CD8-positive, alpha-beta T cell (primary cell): ENCODE measurements at regions of chr3 and their contacts with region 1.

Region 1: DNA sequence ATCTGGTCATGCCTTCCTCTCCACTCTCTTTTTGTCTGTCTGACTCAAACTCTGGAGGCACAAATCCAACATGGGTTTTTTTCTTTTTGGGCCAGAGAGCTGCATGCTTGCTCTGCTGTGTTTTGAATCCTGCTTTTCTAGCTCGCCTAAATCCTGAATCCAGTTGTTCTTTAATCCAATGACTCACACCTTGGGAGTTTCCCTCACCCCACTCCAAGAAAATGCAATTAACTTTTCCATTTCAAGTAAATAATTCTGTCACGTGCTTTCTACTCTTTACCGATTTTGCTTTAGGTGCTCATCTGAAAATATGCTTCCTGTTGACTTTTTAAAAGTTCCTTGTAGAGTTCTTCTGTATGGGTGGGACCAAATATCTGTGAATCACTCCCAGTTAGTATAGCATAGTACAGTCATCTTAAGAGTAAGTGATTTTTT is 47.6 kb downstream of the SLMAP start:
- DNase-seq: peak in 1 of 9 experiments; percentile 30
- ATAC-seq: peak; percentile 76
- H3K4me3 ChIP-seq: no peak overlapping the region
- H3K4me3 Mint-ChIP-seq: peak overlapping the region; percentile 52
- H3K27ac ChIP-seq: peak overlapping the region in 1 of 2 experiments; percentile 59
- H3K27ac Mint-ChIP-seq: peak overlapping the region; percentile 84
- H3K4me1 ChIP-seq: peaks cover 27% of the 10 kb centered on the region
- H3K4me1 Mint-ChIP-seq: peaks cover 75% of the 10 kb centered on the region
- H3K27me3 ChIP-seq: no peaks in the 10 kb centered on the region
- H3K27me3 Mint-ChIP-seq: no peaks in the 10 kb centered on the region
- CTCF ChIP-seq: no peak

Region 2: DNA sequence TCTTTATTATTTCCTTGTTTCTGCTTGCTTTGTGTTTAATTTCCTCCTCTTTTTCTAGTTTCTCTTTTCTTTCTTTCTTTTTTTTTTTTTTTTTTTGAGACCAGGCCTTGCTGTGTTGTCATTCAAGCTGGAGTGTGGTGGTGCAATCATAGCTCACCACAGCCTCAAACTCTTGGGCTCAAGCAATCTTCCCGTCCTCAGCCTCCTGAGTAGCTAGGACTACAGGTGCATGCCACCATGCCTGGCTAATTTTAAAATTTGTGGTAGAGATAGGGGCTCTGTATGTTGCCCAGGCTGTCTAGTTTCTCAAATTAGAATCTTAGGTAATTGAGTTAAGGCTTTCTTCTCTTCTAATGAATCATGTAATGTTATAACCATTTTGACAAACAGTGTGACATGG is 25.2 kb before region 1 on chr3:
- CTCF ChIA-PET with region 1: no interaction called
- POLR2A ChIA-PET with region 1: no interaction called
- intact Hi-C with region 1: loop called in 1 of 2 experiments (anchors 1 kb)
- DNase-seq: no peak
- ATAC-seq: no peak
- H3K4me3 ChIP-seq: no peak overlapping the region
- H3K4me3 Mint-ChIP-seq: no peak overlapping the region
- H3K27ac ChIP-seq: no peak overlapping the region
- H3K27ac Mint-ChIP-seq: no peak overlapping the region
- H3K4me1 ChIP-seq: no peaks in the 10 kb centered on the region
- H3K4me1 Mint-ChIP-seq: peaks cover 39% of the 10 kb centered on the region
- H3K27me3 ChIP-seq: no peaks in the 10 kb centered on the region
- H3K27me3 Mint-ChIP-seq: no peaks in the 10 kb centered on the region
- CTCF ChIP-seq: no peak

Region 3: GRCh38 chr3:57815036-57815435 is 11.4 kb after region 1 on chr3:
- CTCF ChIA-PET with region 1: interaction called, 3 read pairs
- POLR2A ChIA-PET with region 1: interaction called, 3 read pairs
- intact Hi-C with region 1: loop called in 1 of 2 experiments (anchors 2 kb)
- DNase-seq: peak in 8 of 9 experiments; percentile 30 to 72 (median 46)
- ATAC-seq: peak; percentile 78
- H3K4me3 ChIP-seq: no peak overlapping the region
- H3K4me3 Mint-ChIP-seq: peak overlapping the region; percentile 64
- H3K27ac ChIP-seq: peak overlapping the region in 1 of 2 experiments; percentile 66
- H3K27ac Mint-ChIP-seq: peak overlapping the region; percentile 85
- H3K4me1 ChIP-seq: peaks cover 28% of the 10 kb centered on the region
- H3K4me1 Mint-ChIP-seq: peaks cover 51% of the 10 kb centered on the region
- H3K27me3 ChIP-seq: no peaks in the 10 kb centered on the region
- H3K27me3 Mint-ChIP-seq: no peaks in the 10 kb centered on the region
- CTCF ChIP-seq: no peak